ENCODE measurements at regions of chr16 and their contacts with region 1.

Region 1: GRCh38 chr16:11977376-11978041 is 975 bp downstream of the SNX29 start:
- DNase-seq: peak; percentile 12
- H3K4me3 ChIP-seq: peak overlapping the region; percentile 72 to 97 (median 74)
- H3K27ac ChIP-seq: no peak overlapping the region
- H3K4me1 ChIP-seq: peaks cover 14% of the 10 kb centered on the region
- H3K27me3 ChIP-seq: no peaks in the 10 kb centered on the region
- CTCF ChIP-seq: no peak
- POLR2A ChIP-seq: no peak

Region 2: DNA sequence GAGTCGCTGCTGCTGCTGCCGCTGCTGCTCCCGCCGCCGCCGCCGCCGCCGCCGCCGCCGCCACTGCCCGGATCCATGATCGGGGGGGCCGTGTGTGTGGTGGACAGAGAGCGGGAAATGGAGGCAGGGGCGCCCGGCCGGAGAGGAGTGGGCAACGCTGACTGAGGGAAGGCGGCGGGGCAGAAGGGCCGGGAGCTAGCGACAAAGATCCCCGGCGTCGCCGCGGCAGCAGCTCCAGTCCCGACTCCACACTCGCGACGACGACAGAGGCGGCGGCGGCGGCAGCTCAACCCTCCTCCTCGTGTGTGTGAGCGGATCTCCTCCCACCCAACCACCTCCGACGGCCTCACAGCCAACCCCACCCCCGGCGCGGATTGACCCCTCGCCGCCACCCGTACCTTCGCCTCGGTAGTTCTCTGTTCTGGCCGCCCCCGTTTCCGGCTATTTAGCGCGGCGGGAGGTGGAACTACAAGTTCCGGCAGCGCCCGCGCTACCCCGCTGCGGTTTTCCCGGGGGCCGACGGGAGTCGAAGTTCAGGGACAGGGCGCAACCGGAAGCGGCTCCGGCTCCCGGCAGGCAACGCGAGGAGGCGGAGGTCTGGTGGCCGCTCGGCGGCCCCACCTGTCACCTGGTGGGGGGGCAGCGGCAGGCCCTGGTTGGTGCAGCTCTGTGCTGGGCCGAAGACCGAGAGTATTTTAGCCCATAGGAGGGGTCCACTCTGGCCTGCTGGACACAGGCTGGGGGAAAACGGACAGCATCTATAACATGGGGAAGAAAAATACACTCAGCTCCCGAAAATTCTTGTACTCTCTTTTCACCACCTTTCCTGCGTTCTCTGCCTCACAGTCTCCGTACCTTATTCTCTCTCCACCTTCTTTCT is 61.6 kb before region 1 on chr16 and contains the start of gene GSPT1:
- CTCF ChIA-PET with region 1: interaction called, 3 read pairs
- POLR2A ChIA-PET with region 1: interaction called, 3 read pairs
- dilution Hi-C with region 1: no loop called
- intact Hi-C with region 1: loop called (anchors 2 kb)
- DNase-seq: peak; percentile 99
- H3K4me3 ChIP-seq: peak within 1 kb of the TSS; percentile 68 to 96 (median 77)
- H3K27ac ChIP-seq: peak within 1 kb of the TSS; percentile 76
- H3K4me1 ChIP-seq: peaks cover 24% of the 10 kb centered on the region
- H3K27me3 ChIP-seq: peaks cover 0 to 2% of the 10 kb centered on the region in 2 experiments
- CTCF ChIP-seq: peak in 1 of 2 donors; percentile 9
- POLR2A ChIP-seq: peak; percentile 76
- total RNA-seq, gene GSPT1: 137 and 152 TPM in 2 replicates

Region 3: DNA sequence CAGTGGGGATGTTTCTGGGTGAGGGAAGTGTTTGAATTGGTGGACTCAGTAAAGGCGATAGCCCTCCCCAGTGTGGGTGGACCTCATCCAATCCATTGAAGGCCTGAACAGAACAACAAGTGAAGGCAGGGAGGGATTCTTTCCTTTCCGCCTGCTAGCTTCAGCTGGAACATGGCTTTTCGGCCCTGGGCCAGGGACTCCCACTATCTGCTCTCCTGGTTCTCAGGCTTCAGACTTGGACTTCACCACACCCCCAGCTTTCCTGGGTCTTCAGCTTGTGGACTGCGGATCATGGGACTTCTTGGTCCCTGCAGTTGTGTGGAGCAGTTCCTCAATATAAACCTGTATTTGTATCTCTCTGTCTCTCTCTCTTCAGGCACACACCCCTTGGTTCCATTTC is 76.9 kb after region 1 on chr16:
- CTCF ChIA-PET with region 1: no interaction called
- POLR2A ChIA-PET with region 1: no interaction called
- dilution Hi-C with region 1: no loop called
- intact Hi-C with region 1: no loop called
- DNase-seq: no peak
- H3K4me3 ChIP-seq: no peak overlapping the region
- H3K27ac ChIP-seq: no peak overlapping the region
- H3K4me1 ChIP-seq: no peaks in the 10 kb centered on the region
- H3K27me3 ChIP-seq: no peaks in the 10 kb centered on the region
- CTCF ChIP-seq: no peak
- POLR2A ChIP-seq: no peak

Measured in endothelial cell of umbilical vein (primary cell).